GM12878 (cell line): ENCODE measurements at regions of chr3 and their contacts with region 1.

Region 1: GRCh38 chr3:66407611-66408218 is 93.1 kb downstream of the LRIG1 start:
- DNase-seq: no peak
- ATAC-seq: peak; percentile 98
- H3K4me3 ChIP-seq: no peak overlapping the region
- H3K27ac ChIP-seq: no peak overlapping the region
- H3K4me1 ChIP-seq: no peaks in the 10 kb centered on the region
- H3K27me3 ChIP-seq: no peaks in the 10 kb centered on the region
- CTCF ChIP-seq: peak; percentile 85 to 96 (median 93)
- EP300 ChIP-seq: no peak
- POLR2A ChIP-seq: no peak
- RAD21 ChIP-seq: peak; percentile 94

Region 2: DNA sequence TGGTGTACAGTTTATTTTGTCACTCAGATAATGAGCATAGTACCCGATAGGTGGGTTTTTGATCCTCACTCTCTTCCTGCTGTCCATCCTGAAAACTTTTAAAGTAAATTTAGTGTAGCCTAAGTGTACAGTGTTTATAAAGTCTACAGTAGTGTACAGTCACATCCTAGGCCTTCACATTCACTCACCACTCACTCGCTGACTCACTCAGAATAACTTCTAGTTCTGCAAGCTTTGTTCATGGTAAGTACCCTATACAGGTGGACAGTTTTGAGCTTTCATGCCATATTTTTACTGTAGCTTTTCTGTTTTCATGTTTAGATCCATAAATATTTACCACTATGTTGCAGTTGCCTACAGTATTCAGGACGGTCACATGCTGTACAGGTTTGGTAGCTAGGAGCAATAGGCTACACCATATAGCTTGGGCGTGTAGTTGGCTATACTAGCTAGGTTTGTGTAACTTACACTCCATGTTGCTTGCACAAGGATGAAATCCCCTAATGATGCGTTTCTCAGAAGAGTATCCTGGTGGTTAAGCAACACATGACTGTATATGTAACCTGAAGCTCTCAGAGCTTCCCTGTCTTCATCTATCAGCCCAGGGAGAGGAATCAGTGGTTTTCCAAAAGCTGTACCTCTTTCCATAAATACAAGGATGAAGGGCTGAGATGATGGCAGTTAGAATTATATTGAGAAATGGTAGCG is 274.5 kb before region 1 on chr3:
- CTCF ChIA-PET with region 1: no interaction called
- POLR2A ChIA-PET with region 1: no interaction called
- RAD21 ChIA-PET with region 1: no interaction called
- SMC1A ChIA-PET with region 1: no interaction called
- in situ Hi-C with region 1: no loop called
- intact Hi-C with region 1: no loop called
- DNase-seq: no peak
- ATAC-seq: no peak
- H3K4me3 ChIP-seq: no peak overlapping the region
- H3K27ac ChIP-seq: no peak overlapping the region
- H3K4me1 ChIP-seq: no peaks in the 10 kb centered on the region
- H3K27me3 ChIP-seq: no peaks in the 10 kb centered on the region
- CTCF ChIP-seq: no peak
- EP300 ChIP-seq: no peak
- POLR2A ChIP-seq: no peak
- RAD21 ChIP-seq: no peak

Region 3: GRCh38 chr3:66276705-66277274 is 130.9 kb before region 1 on chr3:
- CTCF ChIA-PET with region 1: interaction called, 9 read pairs
- POLR2A ChIA-PET with region 1: no interaction called
- RAD21 ChIA-PET with region 1: interaction called, 4 read pairs
- SMC1A ChIA-PET with region 1: interaction called, 25 read pairs
- in situ Hi-C with region 1: no loop called
- intact Hi-C with region 1: loop called (anchors 5 kb)
- DNase-seq: no peak
- ATAC-seq: peak; percentile 70
- H3K4me3 ChIP-seq: no peak overlapping the region
- H3K27ac ChIP-seq: no peak overlapping the region
- H3K4me1 ChIP-seq: no peaks in the 10 kb centered on the region
- H3K27me3 ChIP-seq: no peaks in the 10 kb centered on the region
- CTCF ChIP-seq: peak; percentile 41 to 69 (median 49); a peak in 5 of 6 replicates
- EP300 ChIP-seq: no peak
- POLR2A ChIP-seq: no peak
- RAD21 ChIP-seq: peak; percentile 89

Region 4: DNA sequence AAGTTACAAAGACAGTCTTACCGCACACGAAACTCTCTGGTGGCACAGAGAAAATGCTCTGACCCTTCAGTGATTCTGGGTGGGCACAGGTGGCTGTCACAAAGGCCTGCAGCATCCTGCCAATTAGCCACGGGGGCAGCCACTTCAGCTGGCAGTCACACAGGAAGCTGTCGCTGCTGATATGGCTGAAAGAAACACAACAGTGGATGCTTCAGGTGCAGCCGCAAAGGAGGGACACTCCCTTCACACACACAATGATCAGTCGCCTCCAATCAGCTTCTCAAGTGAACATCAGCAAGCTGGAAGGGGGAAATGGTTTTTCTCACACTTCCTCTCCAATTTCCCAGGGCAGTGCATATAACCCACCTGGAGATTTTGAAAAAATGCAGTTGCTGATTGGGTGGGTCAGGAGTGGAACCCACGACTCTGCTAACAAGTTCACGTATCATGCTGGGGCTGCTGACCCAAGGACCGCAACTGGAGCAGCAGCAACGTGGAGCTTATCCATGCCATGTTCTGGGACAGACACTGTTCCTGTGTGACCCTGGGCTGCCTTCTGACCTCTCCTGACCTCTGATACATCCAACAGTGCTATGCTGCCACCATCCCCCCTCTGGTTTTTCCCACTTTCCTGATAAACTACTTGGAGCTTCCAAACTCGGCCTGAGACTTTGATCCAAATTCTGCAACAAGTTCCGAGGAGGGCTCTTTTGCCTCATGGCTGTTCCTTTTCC is 13.5 kb before region 1 on chr3:
- CTCF ChIA-PET with region 1: interaction called, 17 read pairs
- POLR2A ChIA-PET with region 1: interaction called, 4 read pairs
- RAD21 ChIA-PET with region 1: interaction called, 4 read pairs
- SMC1A ChIA-PET with region 1: interaction called, 29 read pairs
- in situ Hi-C with region 1: no loop called
- intact Hi-C with region 1: no loop called
- DNase-seq: peak; percentile 47
- ATAC-seq: peak; percentile 85
- H3K4me3 ChIP-seq: peak overlapping the region; percentile 29; the same call in 1 of the 2 replicates
- H3K27ac ChIP-seq: peak overlapping the region; percentile 28; the same call in 1 of the 2 replicates
- H3K4me1 ChIP-seq: peaks cover 22% of the 10 kb centered on the region
- H3K27me3 ChIP-seq: no peaks in the 10 kb centered on the region
- CTCF ChIP-seq: no peak
- EP300 ChIP-seq: no peak; a peak in 1 of 4 replicates
- POLR2A ChIP-seq: peak; percentile 70
- RAD21 ChIP-seq: no peak

Region 5: GRCh38 chr3:66500576-66501482 is 93.1 kb after region 1 on chr3 and contains the start of gene LRIG1:
- CTCF ChIA-PET with region 1: interaction called, 5 read pairs
- POLR2A ChIA-PET with region 1: no interaction called
- RAD21 ChIA-PET with region 1: interaction called, 3 read pairs
- SMC1A ChIA-PET with region 1: interaction called, 4 read pairs
- in situ Hi-C with region 1: no loop called
- intact Hi-C with region 1: loop called (anchors 1 kb)
- DNase-seq: peak; percentile 68
- ATAC-seq: peak; percentile 96
- H3K4me3 ChIP-seq: peak within 1 kb of the TSS; percentile 64
- H3K27ac ChIP-seq: no peak within 1 kb of the TSS
- H3K4me1 ChIP-seq: peaks cover 4% of the 10 kb centered on the region; the same call in 1 of the 2 replicates
- H3K27me3 ChIP-seq: peaks cover 2 to 4% of the 10 kb centered on the region in 2 experiments; a peak in 3 of 4 replicates
- CTCF ChIP-seq: peak in 2 of 3 experiments; percentile 13 to 20; a peak in 3 of 6 replicates
- EP300 ChIP-seq: no peak
- POLR2A ChIP-seq: peak; percentile 84
- RAD21 ChIP-seq: peak; percentile 47
- polyA plus RNA-seq, gene LRIG1: 0.84 to 2.5 TPM